Sigmoid colon (tissue), 7 donors: ENCODE measurements at regions of chr1 and their contacts with region 1.

Region 1: DNA sequence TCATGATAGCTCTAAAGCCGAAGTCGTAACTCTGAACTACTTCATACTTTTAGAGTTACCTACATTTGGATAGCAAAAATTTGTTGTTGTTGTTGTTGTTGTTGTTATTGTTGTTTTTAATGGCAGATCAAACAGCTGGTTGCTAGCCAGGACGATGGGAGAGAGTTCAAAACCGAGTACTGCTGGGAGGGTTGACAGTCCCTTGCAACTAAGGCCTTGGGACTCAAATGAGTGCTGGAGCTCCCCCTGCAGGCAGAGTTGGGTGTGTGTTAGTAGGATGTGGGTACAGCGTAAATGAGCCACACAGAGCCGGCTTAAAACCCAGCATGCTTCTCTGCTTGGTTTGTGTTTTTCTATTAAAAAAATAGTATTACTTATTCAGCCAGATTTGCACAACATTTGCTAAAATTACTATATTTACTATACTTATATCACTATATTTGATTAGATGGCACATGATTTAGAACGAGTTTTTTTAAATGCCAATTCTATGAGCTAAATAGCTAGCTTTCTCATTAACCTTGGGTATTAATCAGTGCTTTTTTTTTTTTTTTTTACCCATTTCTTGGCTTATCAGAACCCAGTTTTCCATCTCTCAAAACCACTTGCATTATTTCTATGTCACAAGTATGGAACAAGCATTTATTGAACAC is 129.2 kb upstream of the SYT6 start:
- DNase-seq: peak; percentile 94
- H3K4me3 ChIP-seq: no peak overlapping the region
- H3K27ac ChIP-seq: no peak overlapping the region
- H3K4me1 ChIP-seq: no peaks in the 10 kb centered on the region
- H3K27me3 ChIP-seq: no peaks in the 10 kb centered on the region
- CTCF ChIP-seq: peak; percentile 81 to 85 (median 84)
- EP300 ChIP-seq: no peak
- POLR2A ChIP-seq: no peak

Region 2: GRCh38 chr1:113835642-113836307 is 447.1 kb before region 1 on chr1:
- intact Hi-C with region 1: loop called (anchors 2 kb)
- DNase-seq: no peak
- H3K4me3 ChIP-seq: no peak overlapping the region
- H3K27ac ChIP-seq: no peak overlapping the region
- H3K4me1 ChIP-seq: peaks cover 0 to 7% (median 0%) of the 10 kb centered on the region in 4 donors
- H3K27me3 ChIP-seq: no peaks in the 10 kb centered on the region
- CTCF ChIP-seq: peak in 3 of 4 experiments; percentile 35 to 61 (median 43)
- EP300 ChIP-seq: no peak
- POLR2A ChIP-seq: no peak

Region 3: DNA sequence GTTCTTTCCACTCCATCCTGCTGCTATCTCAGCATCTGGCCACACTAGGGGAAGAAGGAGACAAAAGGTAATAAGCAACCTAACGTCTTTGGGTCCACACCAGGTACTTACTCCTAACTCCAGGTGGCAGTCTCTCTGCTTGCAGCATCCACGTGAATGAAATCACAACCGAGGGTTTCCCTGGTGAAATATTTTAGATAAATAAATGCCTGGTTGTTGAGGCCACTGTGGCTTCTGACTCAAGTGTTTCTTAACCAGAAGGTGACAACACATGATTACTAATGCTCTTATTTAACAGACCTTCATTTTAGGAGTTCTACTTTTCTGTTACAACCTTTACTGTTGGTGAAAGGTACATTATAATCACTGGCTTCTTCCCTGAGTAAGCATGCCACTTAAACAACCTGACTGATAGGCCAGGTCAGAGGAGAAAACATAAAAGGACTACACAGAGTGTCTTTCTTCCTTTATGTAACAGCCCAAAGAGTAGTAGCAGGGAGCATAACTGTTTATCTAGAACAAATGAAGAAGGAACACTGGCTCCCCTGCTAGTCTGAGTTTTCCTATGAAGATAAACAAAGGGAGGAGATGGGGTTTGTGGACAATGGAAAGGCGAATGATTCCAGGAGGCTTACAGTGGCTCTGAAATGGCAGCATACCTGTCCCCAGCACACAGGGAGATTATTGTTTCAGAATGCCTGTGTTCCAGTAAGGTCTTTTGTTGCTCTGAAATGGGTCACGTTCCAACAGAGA is 189.1 kb before region 1 on chr1:
- intact Hi-C with region 1: loop called (anchors 5 kb)
- DNase-seq: no peak
- H3K4me3 ChIP-seq: no peak overlapping the region
- H3K27ac ChIP-seq: peak overlapping the region in 3 of 4 donors; percentile 54 to 74 (median 54)
- H3K4me1 ChIP-seq: peaks cover 0 to 30% (median 14%) of the 10 kb centered on the region in 4 donors
- H3K27me3 ChIP-seq: no peaks in the 10 kb centered on the region
- CTCF ChIP-seq: peak in 1 of 4 experiments; percentile 12
- EP300 ChIP-seq: no peak
- POLR2A ChIP-seq: no peak